A549 (cell line): ENCODE measurements at regions of chr3 and their contacts with region 1.

Region 1: DNA sequence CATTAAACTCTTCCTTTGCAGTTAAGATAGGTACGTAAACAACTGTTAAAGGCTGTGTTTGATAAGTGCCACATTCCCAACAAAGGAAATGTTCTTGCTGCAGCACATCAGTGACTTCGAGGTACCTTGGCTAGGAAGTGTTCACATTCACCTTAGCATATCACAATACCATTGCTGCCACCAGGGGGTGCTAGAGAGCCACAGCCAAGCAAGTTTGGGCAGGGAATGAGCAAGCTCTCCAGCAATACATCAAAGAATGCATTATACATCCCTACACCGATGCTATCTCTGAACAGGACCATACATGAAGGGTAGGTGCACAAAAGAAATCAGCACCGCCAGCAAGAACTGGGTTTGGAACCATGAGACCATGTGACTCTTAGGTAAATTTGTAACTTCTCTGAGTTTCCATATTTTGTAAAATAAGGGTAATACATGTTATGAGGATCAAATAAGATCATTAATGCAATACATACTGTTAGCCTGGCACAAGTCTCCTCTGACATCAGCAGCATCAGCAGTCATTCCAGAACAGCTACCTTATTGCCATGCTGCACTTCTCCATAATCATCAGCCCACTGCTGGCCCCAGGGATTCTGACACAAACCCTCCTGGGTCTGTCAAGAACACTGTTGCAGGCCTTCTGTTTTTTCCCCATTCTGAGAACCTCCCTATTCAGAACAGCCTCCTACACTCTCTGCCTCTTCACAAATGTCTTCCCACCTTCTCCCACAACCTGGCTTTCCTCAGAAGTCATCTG is 37.6 kb downstream of the RYK start:
- DNase-seq: peak; percentile 60 to 71
- ATAC-seq: peak; percentile 98 to 99
- H3K4me3 ChIP-seq: no peak overlapping the region
- H3K27ac ChIP-seq: no peak overlapping the region
- H3K4me1 ChIP-seq: peaks cover 3% of the 10 kb centered on the region; the same call in 1 of the 3 replicates
- CTCF ChIP-seq: peak; percentile 84
- EP300 ChIP-seq: no peak
- POLR2A ChIP-seq: no peak
- RAD21 ChIP-seq: peak; percentile 68 to 75

Region 2: GRCh38 chr3:133927540-133928066 is 285.5 kb before region 1 on chr3:
- CTCF ChIA-PET with region 1: interaction called, 49 read pairs
- POLR2A ChIA-PET with region 1: no interaction called
- DNase-seq: peak in 1 of 2 experiments; percentile 38
- ATAC-seq: peak; percentile 72 to 84
- H3K4me3 ChIP-seq: peak overlapping the region; percentile 60
- H3K27ac ChIP-seq: peak overlapping the region; percentile 61 to 83; a peak in 5 of 6 replicates
- H3K4me1 ChIP-seq: no peaks in the 10 kb centered on the region
- CTCF ChIP-seq: peak; percentile 83
- EP300 ChIP-seq: no peak
- POLR2A ChIP-seq: no peak
- RAD21 ChIP-seq: peak in 1 of 2 experiments; percentile 71; a peak in 4 of 5 replicates

Region 3: DNA sequence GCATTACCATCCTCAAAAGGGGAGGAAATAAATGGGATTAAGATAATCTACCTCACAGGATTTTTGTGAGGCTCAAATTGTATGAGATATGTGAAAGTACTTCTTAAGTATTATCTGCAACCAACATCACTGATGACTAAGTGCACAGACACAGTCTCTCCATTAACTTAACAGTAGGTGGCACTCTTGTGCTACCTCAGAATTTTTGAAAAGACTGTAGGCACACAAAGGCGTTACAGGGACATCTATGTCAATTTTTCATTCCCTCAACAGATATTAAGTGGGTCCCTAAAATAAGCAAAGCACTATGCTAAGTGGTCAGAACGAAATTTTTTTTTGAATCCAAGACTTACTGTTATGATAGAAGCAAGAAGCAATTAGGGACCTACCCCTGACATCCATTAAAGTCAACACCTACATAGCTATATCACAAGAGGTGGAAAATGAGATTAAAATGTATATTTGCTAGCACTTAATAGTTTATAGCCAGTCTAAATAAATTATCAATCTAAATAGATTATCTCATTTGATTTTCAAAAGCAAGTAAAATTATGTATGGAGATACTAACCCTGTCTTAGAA is 15.3 kb before region 1 on chr3:
- CTCF ChIA-PET with region 1: interaction called, 60 read pairs
- POLR2A ChIA-PET with region 1: no interaction called
- DNase-seq: peak; percentile 44 to 62
- ATAC-seq: peak; percentile 92
- H3K4me3 ChIP-seq: no peak overlapping the region
- H3K27ac ChIP-seq: no peak overlapping the region
- H3K4me1 ChIP-seq: no peaks in the 10 kb centered on the region
- CTCF ChIP-seq: peak; percentile 66
- EP300 ChIP-seq: no peak
- POLR2A ChIP-seq: no peak
- RAD21 ChIP-seq: peak; percentile 50 to 64; a peak in 4 of 5 replicates

Region 4: GRCh38 chr3:134239538-134239937 is 26.5 kb after region 1 on chr3:
- CTCF ChIA-PET with region 1: interaction called, 24 read pairs
- POLR2A ChIA-PET with region 1: no interaction called
- DNase-seq: no peak
- ATAC-seq: no peak
- H3K4me3 ChIP-seq: no peak overlapping the region
- H3K27ac ChIP-seq: no peak overlapping the region
- H3K4me1 ChIP-seq: peaks cover 51% of the 10 kb centered on the region
- CTCF ChIP-seq: no peak
- EP300 ChIP-seq: no peak
- POLR2A ChIP-seq: no peak
- RAD21 ChIP-seq: no peak

Region 5: DNA sequence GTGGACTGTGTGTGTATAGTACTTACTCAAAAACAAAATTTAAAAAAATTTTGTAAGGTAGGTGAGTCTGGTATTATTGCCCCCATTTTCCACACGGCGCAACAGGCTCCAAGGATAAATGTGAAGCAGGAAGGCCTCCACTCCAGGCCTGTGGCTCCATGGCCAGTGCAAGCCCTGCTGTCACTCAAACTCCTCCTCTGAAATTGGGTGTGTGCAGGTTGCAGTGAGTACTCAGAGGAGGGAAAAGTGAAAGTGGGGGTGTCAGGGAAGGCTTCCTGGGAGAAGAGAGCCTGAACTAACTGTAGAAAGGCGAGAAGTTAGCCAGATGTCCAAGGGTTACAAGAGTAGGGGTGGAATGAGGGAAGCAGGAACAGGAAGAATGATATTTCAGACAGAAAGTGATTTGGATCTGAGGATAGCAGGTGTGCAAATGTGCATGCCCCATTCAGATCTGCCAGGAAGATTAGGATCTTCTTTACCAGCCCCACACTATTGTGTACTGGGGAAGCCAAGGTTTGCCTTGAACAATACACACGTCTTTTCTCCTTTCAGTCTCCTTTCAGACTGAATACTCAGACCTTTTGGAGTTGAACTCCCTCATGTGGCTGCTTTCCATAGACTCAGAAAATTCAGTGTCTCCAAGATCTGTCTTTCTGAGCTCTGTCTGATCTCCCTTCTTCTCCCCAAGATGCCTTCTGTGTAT is 86.2 kb after region 1 on chr3:
- CTCF ChIA-PET with region 1: interaction called, 11 read pairs
- POLR2A ChIA-PET with region 1: no interaction called
- DNase-seq: no peak
- ATAC-seq: peak; percentile 78
- H3K4me3 ChIP-seq: no peak overlapping the region
- H3K27ac ChIP-seq: no peak overlapping the region
- H3K4me1 ChIP-seq: no peaks in the 10 kb centered on the region; the same call in 2 of the 3 replicates
- CTCF ChIP-seq: peak; percentile 20; the same call in 2 of the 3 replicates
- EP300 ChIP-seq: no peak
- POLR2A ChIP-seq: no peak
- RAD21 ChIP-seq: peak; percentile 34 to 39; a peak in 4 of 5 replicates

Region 6: DNA sequence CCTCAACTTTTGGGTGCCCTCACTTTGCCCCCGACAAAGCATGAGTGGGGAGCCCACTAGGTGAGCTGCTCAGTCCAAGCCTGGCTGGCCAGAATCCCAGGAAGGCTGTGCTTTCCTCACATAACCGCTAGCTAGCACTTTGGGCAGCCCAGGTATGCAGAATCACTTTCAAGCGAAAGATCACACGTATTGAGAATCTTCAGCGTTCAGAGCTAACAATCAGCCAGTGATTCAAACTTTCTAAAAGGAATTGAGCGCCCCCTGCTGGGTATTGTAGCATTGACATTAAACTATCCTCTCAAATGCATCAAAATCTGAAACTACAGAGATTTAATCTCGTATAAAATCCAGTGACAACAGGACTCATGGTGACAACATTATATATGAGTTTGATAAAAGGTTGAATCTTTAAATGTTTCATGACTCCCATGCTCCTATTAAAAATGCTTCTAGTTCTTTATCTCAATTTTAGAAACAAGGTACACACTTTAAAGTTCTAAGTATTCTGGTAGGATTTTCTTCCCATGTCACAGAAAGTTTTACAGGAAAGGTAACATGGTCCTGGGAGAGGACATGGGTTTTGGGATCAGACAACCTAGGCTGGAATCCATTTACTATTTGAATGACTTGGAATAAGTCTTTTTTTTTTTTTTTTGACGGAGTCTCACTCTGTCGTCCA is 260.9 kb after region 1 on chr3:
- CTCF ChIA-PET with region 1: interaction called, 17 read pairs
- POLR2A ChIA-PET with region 1: no interaction called
- DNase-seq: peak; percentile 18 to 71
- ATAC-seq: peak; percentile 71 to 82
- H3K4me3 ChIP-seq: no peak overlapping the region
- H3K27ac ChIP-seq: peak overlapping the region; percentile 63 to 88
- H3K4me1 ChIP-seq: peaks cover 48% of the 10 kb centered on the region
- CTCF ChIP-seq: peak; percentile 73
- EP300 ChIP-seq: no peak
- POLR2A ChIP-seq: no peak
- RAD21 ChIP-seq: peak; percentile 85 to 88